ENCODE measurements at regions of chr15 and their contacts with region 1.

Region 1: DNA sequence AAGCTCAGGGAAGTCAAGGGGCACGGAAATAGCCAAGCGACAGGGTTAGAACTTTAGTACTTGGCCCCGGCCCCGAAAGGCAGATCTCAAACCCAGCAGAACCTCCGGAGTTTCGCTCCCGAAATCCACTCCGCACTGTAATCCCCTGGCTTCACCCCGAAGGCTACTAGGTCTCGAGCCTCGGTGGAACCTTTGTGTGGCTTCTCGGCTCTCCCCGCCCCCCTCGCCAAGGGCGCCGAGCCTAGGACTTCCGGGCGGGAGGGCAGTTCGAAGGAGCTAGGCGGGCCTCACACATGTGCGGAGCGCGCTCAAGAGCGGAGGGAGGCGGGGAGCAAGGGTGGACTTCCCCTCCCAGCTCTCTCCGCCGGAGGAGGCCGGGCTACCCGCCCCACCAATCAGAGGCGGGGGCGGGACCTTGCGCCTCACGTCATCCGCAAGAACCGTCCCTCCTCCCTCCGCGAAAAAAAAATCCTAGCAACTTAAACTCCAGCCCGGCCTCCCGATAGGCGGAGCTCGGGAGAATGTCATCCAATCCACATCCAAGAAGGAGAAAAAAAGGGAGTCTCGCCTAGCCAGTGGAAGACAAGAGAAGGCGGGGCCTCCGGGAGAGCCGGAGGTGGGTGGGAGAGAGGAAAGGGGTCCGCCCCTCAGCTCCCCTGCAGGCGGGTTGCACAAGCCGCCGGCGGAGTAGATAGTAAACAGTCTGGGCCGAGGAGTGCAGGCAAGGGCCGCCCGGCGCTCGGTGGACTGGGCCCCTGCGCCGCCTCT is 2.4 kb upstream of the SIN3A start:
- DNase-seq: peak; percentile 93 to 100 (median 95)
- ATAC-seq: peak; percentile 39
- H3K4me3 ChIP-seq: peak overlapping the region; percentile 86 to 96
- H3K4me3 Mint-ChIP-seq: peak overlapping the region; percentile 92
- H3K27ac ChIP-seq: peak overlapping the region; percentile 83 to 92
- H3K27ac Mint-ChIP-seq: peak overlapping the region; percentile 99
- H3K4me1 ChIP-seq: peaks cover 23% of the 10 kb centered on the region
- H3K4me1 Mint-ChIP-seq: peaks cover 37% of the 10 kb centered on the region
- H3K27me3 ChIP-seq: no peaks in the 10 kb centered on the region
- H3K27me3 Mint-ChIP-seq: no peaks in the 10 kb centered on the region
- CTCF ChIP-seq: no peak

Region 2: DNA sequence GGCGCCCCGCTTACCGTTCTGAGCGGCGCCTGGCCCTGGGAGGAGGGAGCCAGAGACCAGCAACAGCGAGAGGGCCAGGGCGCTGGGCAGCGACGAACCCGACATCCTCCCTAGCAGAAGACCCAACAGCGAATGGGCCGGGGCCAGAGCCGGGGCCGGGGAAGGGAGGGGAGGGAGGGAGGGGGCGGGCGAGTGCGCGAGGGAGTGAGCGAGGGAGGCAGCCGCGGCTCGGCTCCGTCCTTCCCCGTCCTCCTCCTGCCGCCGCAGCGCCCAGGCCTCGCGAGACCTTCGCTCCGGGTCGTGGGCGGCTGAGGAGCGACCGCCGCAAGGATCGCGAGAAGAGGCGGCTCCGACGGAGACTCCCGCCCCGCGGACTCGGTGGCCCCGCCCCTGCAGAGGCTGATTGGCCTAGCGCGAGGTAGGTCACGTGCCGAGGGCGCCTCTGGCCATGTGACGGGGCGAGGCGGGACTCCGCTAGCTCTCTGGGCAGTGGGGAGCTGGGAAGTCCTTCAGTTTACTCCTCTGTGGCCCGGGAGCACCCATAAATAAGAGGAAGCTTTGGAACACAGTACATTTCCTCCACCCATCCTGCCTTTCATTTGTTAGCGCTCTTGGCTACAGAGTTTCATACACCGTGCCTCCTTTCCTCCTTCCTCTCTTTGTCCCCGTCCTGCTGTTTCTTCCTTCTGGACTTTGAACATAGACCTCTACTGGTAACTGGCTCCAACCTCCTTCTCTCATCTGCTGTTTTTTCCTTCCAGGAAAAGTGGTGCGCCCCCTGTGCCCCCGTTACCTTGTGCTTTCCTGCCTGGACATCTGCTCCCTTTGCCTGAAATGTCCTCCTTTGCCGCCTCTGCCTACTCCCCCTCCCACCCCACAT is 1820.5 kb before region 1 on chr15 and contains the start of gene NPTN:
- CTCF ChIA-PET with region 1: no interaction called
- POLR2A ChIA-PET with region 1: no interaction called
- intact Hi-C with region 1: loop called in 1 of 2 experiments (anchors 10 kb)
- DNase-seq: peak; percentile 96 to 99 (median 97)
- ATAC-seq: peak; percentile 90
- H3K4me3 ChIP-seq: peak within 1 kb of the TSS; percentile 51 to 74
- H3K4me3 Mint-ChIP-seq: peak within 1 kb of the TSS; percentile 82
- H3K27ac ChIP-seq: peak within 1 kb of the TSS; percentile 25 to 78
- H3K27ac Mint-ChIP-seq: peak within 1 kb of the TSS; percentile 81
- H3K4me1 ChIP-seq: peaks cover 33% of the 10 kb centered on the region
- H3K4me1 Mint-ChIP-seq: peaks cover 45% of the 10 kb centered on the region
- H3K27me3 ChIP-seq: no peaks in the 10 kb centered on the region
- H3K27me3 Mint-ChIP-seq: peaks cover 8% of the 10 kb centered on the region
- CTCF ChIP-seq: no peak
- total RNA-seq, gene NPTN: 12.5 to 18.2 TPM

Region 3: GRCh38 chr15:74615508-74616365 is 838.1 kb before region 1 on chr15 and contains the start of gene CLK3:
- CTCF ChIA-PET with region 1: no interaction called
- POLR2A ChIA-PET with region 1: no interaction called
- intact Hi-C with region 1: loop called (anchors 2 kb)
- DNase-seq: peak; percentile 89 to 99 (median 96)
- ATAC-seq: peak; percentile 67
- H3K4me3 ChIP-seq: peak within 1 kb of the TSS; percentile 88 to 95
- H3K4me3 Mint-ChIP-seq: peak within 1 kb of the TSS; percentile 91
- H3K27ac ChIP-seq: peak within 1 kb of the TSS; percentile 97 to 99
- H3K27ac Mint-ChIP-seq: peak within 1 kb of the TSS; percentile 97
- H3K4me1 ChIP-seq: peaks cover 25% of the 10 kb centered on the region
- H3K4me1 Mint-ChIP-seq: peaks cover 38% of the 10 kb centered on the region
- H3K27me3 ChIP-seq: no peaks in the 10 kb centered on the region
- H3K27me3 Mint-ChIP-seq: no peaks in the 10 kb centered on the region
- CTCF ChIP-seq: no peak
- total RNA-seq, gene CLK3: 246 to 262 TPM

Region 4: GRCh38 chr15:75023181-75023871 is 430.6 kb before region 1 on chr15 and contains the start of gene PPCDC:
- CTCF ChIA-PET with region 1: no interaction called
- POLR2A ChIA-PET with region 1: no interaction called
- intact Hi-C with region 1: loop called (anchors 2 to 10 kb)
- DNase-seq: peak; percentile 81 to 96 (median 93)
- ATAC-seq: peak; percentile 100
- H3K4me3 ChIP-seq: peak within 1 kb of the TSS; percentile 82 to 93
- H3K4me3 Mint-ChIP-seq: peak within 1 kb of the TSS; percentile 92
- H3K27ac ChIP-seq: peak within 1 kb of the TSS; percentile 76 to 77
- H3K27ac Mint-ChIP-seq: peak within 1 kb of the TSS; percentile 92
- H3K4me1 ChIP-seq: peaks cover 8% of the 10 kb centered on the region
- H3K4me1 Mint-ChIP-seq: peaks cover 14% of the 10 kb centered on the region
- H3K27me3 ChIP-seq: no peaks in the 10 kb centered on the region
- H3K27me3 Mint-ChIP-seq: no peaks in the 10 kb centered on the region
- CTCF ChIP-seq: no peak
- total RNA-seq, gene PPCDC: 6.0 to 6.5 TPM

Region 5: GRCh38 chr15:75313116-75313845 is 140.6 kb before region 1 on chr15:
- CTCF ChIA-PET with region 1: no interaction called
- POLR2A ChIA-PET with region 1: no interaction called
- intact Hi-C with region 1: no loop called
- DNase-seq: no peak
- ATAC-seq: no peak
- H3K4me3 ChIP-seq: no peak overlapping the region
- H3K4me3 Mint-ChIP-seq: no peak overlapping the region
- H3K27ac ChIP-seq: no peak overlapping the region
- H3K27ac Mint-ChIP-seq: no peak overlapping the region
- H3K4me1 ChIP-seq: no peaks in the 10 kb centered on the region
- H3K4me1 Mint-ChIP-seq: no peaks in the 10 kb centered on the region
- H3K27me3 ChIP-seq: no peaks in the 10 kb centered on the region
- H3K27me3 Mint-ChIP-seq: peaks cover 4% of the 10 kb centered on the region
- CTCF ChIP-seq: no peak

Region 6: GRCh38 chr15:75479670-75480069 is 25.8 kb after region 1 on chr15:
- CTCF ChIA-PET with region 1: no interaction called
- POLR2A ChIA-PET with region 1: no interaction called
- intact Hi-C with region 1: no loop called
- DNase-seq: no peak
- ATAC-seq: no peak
- H3K4me3 ChIP-seq: no peak overlapping the region
- H3K4me3 Mint-ChIP-seq: no peak overlapping the region
- H3K27ac ChIP-seq: no peak overlapping the region
- H3K27ac Mint-ChIP-seq: no peak overlapping the region
- H3K4me1 ChIP-seq: no peaks in the 10 kb centered on the region
- H3K4me1 Mint-ChIP-seq: peaks cover 2% of the 10 kb centered on the region
- H3K27me3 ChIP-seq: no peaks in the 10 kb centered on the region
- H3K27me3 Mint-ChIP-seq: no peaks in the 10 kb centered on the region
- CTCF ChIP-seq: no peak

Region 7: GRCh38 chr15:75508840-75509532 is 55.1 kb after region 1 on chr15:
- CTCF ChIA-PET with region 1: interaction called, 12 read pairs
- POLR2A ChIA-PET with region 1: interaction called, 8 read pairs
- intact Hi-C with region 1: no loop called
- DNase-seq: peak in 5 of 9 experiments; percentile 11 to 64 (median 26)
- ATAC-seq: peak; percentile 54
- H3K4me3 ChIP-seq: no peak overlapping the region
- H3K4me3 Mint-ChIP-seq: no peak overlapping the region
- H3K27ac ChIP-seq: no peak overlapping the region
- H3K27ac Mint-ChIP-seq: peak overlapping the region; percentile 50
- H3K4me1 ChIP-seq: no peaks in the 10 kb centered on the region
- H3K4me1 Mint-ChIP-seq: peaks cover 5% of the 10 kb centered on the region
- H3K27me3 ChIP-seq: no peaks in the 10 kb centered on the region
- H3K27me3 Mint-ChIP-seq: no peaks in the 10 kb centered on the region
- CTCF ChIP-seq: peak; percentile 54

Region 8: DNA sequence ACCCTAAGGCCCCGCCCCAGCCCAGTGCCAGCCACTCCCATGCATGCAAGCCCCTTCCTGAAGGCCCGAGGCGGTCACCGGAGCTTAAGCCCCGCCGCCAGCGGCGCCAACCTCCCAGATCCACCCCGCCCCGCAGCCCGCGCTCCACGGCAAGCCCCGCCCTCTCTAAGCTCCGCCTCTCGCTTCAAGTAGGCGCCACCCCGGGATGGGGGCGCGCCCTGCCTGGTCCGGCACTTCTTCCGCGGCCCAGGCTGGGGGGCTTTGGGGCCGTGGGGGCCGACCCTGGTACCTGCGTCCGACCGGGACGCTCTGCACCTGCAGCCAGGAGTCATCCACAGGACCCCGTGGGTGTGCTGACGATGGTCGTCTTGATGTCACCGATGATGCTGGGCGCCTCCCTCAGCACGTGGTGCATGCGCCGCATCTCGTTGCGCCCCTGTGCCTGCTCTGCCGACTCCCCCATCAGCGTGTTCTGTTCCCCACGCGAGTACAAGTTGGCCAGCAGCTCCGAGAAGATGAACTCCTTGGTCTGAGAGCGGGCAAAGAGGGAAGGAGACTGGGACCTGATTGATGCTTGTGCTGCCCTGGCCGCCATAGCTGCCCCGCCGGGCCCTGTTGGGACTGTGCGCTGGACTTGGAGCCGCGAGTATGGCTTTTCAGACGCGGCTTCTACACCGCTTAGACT is 284.9 kb after region 1 on chr15:
- CTCF ChIA-PET with region 1: no interaction called
- POLR2A ChIA-PET with region 1: no interaction called
- intact Hi-C with region 1: loop called in 1 of 2 experiments (anchors 2 kb)
- DNase-seq: peak; percentile 70 to 92 (median 89)
- ATAC-seq: peak; percentile 91
- H3K4me3 ChIP-seq: peak overlapping the region; percentile 67 to 79
- H3K4me3 Mint-ChIP-seq: peak overlapping the region; percentile 84
- H3K27ac ChIP-seq: peak overlapping the region in 1 of 2 experiments; percentile 51
- H3K27ac Mint-ChIP-seq: peak overlapping the region; percentile 70
- H3K4me1 ChIP-seq: peaks cover 14% of the 10 kb centered on the region
- H3K4me1 Mint-ChIP-seq: peaks cover 14% of the 10 kb centered on the region
- H3K27me3 ChIP-seq: peaks cover 0 to 4% of the 10 kb centered on the region in 2 experiments
- H3K27me3 Mint-ChIP-seq: peaks cover 3% of the 10 kb centered on the region
- CTCF ChIP-seq: no peak

Region 9: GRCh38 chr15:75801859-75802593 is 348.1 kb after region 1 on chr15:
- CTCF ChIA-PET with region 1: no interaction called
- POLR2A ChIA-PET with region 1: no interaction called
- intact Hi-C with region 1: no loop called
- DNase-seq: peak; percentile 53 to 86 (median 78)
- ATAC-seq: peak; percentile 100
- H3K4me3 ChIP-seq: no peak overlapping the region
- H3K4me3 Mint-ChIP-seq: peak overlapping the region; percentile 58
- H3K27ac ChIP-seq: no peak overlapping the region
- H3K27ac Mint-ChIP-seq: no peak overlapping the region
- H3K4me1 ChIP-seq: peaks cover 5% of the 10 kb centered on the region
- H3K4me1 Mint-ChIP-seq: peaks cover 3% of the 10 kb centered on the region
- H3K27me3 ChIP-seq: peaks cover 0 to 10% of the 10 kb centered on the region in 2 experiments
- H3K27me3 Mint-ChIP-seq: peaks cover 31% of the 10 kb centered on the region
- CTCF ChIP-seq: peak; percentile 75

Measured in CD8-positive, alpha-beta T cell (primary cell).